Activated CD4-positive, alpha-beta memory T cell treated with anti-CD3 and anti-CD28 coated beads for 36 hours (primary cell): ENCODE measurements at regions of chr1 and their contacts with region 1.

Region 1: GRCh38 chr1:199226163-199226562 is 587.3 kb downstream of the PTPRC start:
- DNase-seq: peak; percentile 47
- H3K4me3 Mint-ChIP-seq: peak overlapping the region; percentile 35
- H3K27ac Mint-ChIP-seq: peak overlapping the region; percentile 55
- H3K4me1 Mint-ChIP-seq: peaks cover 20% of the 10 kb centered on the region
- H3K27me3 Mint-ChIP-seq: no peaks in the 10 kb centered on the region

Region 2: GRCh38 chr1:198873696-198874230 is 352.4 kb before region 1 on chr1:
- CTCF ChIA-PET with region 1: no interaction called
- POLR2A ChIA-PET with region 1: no interaction called
- intact Hi-C with region 1: no loop called
- DNase-seq: no peak
- H3K4me3 Mint-ChIP-seq: no peak overlapping the region
- H3K27ac Mint-ChIP-seq: no peak overlapping the region
- H3K4me1 Mint-ChIP-seq: no peaks in the 10 kb centered on the region
- H3K27me3 Mint-ChIP-seq: no peaks in the 10 kb centered on the region

Region 3: GRCh38 chr1:198922638-198923430 is 303.3 kb before region 1 on chr1:
- CTCF ChIA-PET with region 1: no interaction called
- POLR2A ChIA-PET with region 1: interaction called, 4 read pairs
- intact Hi-C with region 1: loop called (anchors 1 kb)
- DNase-seq: no peak
- H3K4me3 Mint-ChIP-seq: no peak overlapping the region
- H3K27ac Mint-ChIP-seq: peak overlapping the region; percentile 66
- H3K4me1 Mint-ChIP-seq: peaks cover 58% of the 10 kb centered on the region
- H3K27me3 Mint-ChIP-seq: no peaks in the 10 kb centered on the region

Region 4: DNA sequence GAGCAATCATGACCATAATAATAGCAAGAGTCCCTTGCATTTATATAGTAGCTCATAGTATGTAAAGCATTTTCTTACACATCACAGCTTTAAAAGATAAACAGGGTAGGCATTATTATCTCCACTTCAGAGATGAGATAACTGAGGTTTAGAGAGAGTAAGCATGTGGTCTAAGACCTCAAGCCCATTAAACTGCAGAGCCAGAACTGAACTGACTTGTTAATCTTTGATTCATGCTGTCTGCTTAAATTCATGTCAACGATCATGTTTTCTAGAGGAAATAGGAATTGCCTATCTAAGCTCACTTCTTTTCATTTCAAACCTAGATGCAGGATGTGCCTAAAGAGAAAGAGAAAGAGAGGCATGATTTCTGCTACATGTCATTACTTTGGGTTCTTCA is 62.5 kb before region 1 on chr1:
- CTCF ChIA-PET with region 1: no interaction called
- POLR2A ChIA-PET with region 1: no interaction called
- intact Hi-C with region 1: loop called (anchors 2 kb)
- DNase-seq: no peak
- H3K4me3 Mint-ChIP-seq: no peak overlapping the region
- H3K27ac Mint-ChIP-seq: no peak overlapping the region
- H3K4me1 Mint-ChIP-seq: peaks cover 28% of the 10 kb centered on the region
- H3K27me3 Mint-ChIP-seq: no peaks in the 10 kb centered on the region

Region 5: GRCh38 chr1:199243423-199244061 is 17.4 kb after region 1 on chr1:
- CTCF ChIA-PET with region 1: interaction called, 6 read pairs
- POLR2A ChIA-PET with region 1: no interaction called
- intact Hi-C with region 1: loop called (anchors 2 kb)
- DNase-seq: peak; percentile 87
- H3K4me3 Mint-ChIP-seq: no peak overlapping the region
- H3K27ac Mint-ChIP-seq: no peak overlapping the region
- H3K4me1 Mint-ChIP-seq: no peaks in the 10 kb centered on the region
- H3K27me3 Mint-ChIP-seq: peaks cover 4% of the 10 kb centered on the region

Region 6: DNA sequence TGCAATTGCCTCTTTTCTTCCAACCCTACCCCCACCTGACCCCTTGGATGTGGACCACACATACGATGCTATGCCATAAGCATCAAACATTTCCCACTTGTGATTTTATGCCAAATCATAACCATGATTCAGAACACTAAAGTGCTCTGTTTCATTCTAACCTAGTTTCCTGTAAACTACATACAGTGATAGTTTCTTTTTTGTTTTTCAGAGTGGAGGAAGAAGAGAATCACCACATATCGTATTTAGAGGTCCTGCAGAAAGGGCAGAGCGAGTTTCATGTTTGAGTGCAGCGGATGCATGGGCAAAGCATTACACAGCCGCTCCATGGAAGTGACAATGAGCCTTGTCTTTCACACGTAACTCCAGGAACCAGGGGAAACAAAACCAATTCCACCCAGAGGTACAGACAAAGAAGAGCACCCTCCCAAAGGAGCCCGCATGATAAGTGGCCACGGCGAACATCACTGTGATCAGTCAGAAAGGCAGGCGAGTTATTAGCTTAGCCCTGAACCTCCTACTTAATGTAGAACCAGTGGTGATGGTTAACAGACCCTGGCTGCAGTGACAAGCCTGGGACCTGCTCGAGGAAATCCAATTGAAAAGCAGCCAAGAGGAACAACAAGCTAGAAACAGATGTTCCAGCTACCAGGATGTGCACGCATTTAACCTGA is 1247.7 kb after region 1 on chr1:
- CTCF ChIA-PET with region 1: no interaction called
- POLR2A ChIA-PET with region 1: no interaction called
- intact Hi-C with region 1: loop called (anchors 10 kb)
- DNase-seq: peak; percentile 69
- H3K4me3 Mint-ChIP-seq: peak overlapping the region; percentile 41
- H3K27ac Mint-ChIP-seq: peak overlapping the region; percentile 65
- H3K4me1 Mint-ChIP-seq: peaks cover 42% of the 10 kb centered on the region
- H3K27me3 Mint-ChIP-seq: peaks cover 13% of the 10 kb centered on the region